Caco-2 (cell line): ENCODE measurements at regions of chr5 and their contacts with region 1.

Region 1: DNA sequence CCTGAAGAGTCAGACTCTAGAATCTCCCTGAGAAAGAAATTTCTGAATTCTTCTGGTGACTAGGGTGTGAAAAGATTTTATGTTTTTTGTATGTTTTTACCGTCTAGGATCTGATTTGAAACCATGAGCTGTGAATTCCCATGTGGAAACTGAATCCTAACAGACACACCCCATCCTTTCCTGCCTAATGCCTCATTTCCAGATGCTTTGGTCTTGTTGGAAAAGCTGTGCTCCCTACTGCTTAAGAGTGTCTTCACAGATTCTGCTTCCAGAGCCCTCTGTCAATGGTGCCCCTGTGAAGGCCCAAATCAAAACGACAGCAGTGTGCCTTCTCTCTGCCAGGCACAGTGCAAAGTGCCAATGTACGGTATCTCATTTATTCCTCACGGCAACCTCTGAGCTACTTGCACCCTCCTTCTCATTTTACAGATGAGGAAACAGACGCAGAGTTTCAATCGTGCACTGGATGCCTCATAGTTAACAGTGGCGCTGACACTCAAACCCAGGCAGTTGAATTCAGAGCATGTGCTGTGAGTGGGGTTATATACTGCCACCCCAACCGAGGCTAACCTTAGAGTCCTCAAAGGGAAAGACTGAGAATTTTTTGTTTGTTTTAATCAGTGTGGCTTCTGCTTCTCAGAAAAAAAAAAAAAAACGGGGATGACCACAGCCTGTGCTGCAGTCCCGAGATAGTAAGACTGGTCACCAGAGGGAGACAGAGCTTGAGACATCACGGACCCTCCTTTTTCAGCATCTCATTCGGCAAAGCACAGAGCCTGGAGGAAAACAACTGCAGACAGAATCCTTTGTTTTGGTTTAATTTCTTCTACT is 188.4 kb downstream of the SNCAIP start:
- DNase-seq: peak; percentile 62 to 70
- H3K4me3 ChIP-seq: no peak overlapping the region
- H3K4me3 Mint-ChIP-seq: no peak overlapping the region
- H3K27ac Mint-ChIP-seq: no peak overlapping the region
- H3K4me1 ChIP-seq: no peaks in the 10 kb centered on the region
- H3K4me1 Mint-ChIP-seq: peaks cover 9% of the 10 kb centered on the region
- H3K27me3 ChIP-seq: no peaks in the 10 kb centered on the region
- H3K27me3 Mint-ChIP-seq: no peaks in the 10 kb centered on the region
- CTCF ChIP-seq: peak; percentile 82 to 84

Region 2: DNA sequence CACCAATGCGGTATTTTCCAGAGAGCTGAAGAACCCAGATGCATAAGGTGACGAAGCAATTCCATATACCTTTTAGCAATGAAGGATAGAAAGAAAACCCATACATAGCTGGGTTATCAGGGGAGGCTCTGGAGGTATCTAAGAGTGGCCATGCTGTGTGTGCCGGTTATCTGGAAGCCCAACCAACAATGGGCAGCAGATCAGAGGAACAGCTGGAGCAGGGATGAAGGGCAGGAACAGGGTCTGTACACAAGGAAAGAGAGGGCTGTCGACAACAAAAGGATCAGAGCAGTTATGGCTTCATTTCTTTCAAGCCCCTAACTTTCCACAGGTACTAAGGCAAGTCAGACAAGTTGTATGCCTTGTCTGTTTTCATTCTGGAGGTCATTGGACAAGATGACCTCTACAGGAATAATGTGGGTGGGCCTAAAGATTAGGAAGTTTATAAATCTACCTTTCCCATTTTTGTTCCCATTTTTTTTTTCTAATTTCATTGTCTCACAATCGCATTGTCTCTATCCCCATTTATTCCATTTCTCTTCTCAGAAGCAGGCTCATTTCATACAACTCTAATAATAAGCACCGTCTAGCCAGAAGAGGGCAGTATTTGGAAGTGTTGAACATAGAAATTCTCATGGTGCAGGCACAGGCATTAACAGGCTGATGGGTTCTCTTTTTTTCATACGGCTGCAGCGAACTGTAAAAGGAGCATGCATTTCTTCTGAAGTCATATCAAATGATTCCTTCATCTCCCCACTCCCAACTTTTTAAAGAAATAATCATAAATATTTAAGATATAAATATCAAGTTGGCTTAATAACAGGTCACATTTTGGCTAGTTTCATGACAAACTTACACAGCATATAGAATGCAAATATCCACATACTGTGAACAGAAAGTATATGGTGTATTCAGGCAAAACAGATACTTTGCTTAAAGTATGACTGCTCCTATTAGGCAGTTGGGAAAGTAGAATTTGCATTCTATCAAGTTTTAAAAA is 307.7 kb before region 1 on chr5:
- CTCF ChIA-PET with region 1: interaction called, 8 read pairs
- POLR2A ChIA-PET with region 1: no interaction called
- intact Hi-C with region 1: loop called (anchors 1 kb)
- DNase-seq: peak in 1 of 2 experiments; percentile 69
- H3K4me3 ChIP-seq: no peak overlapping the region
- H3K4me3 Mint-ChIP-seq: no peak overlapping the region
- H3K27ac Mint-ChIP-seq: no peak overlapping the region
- H3K4me1 ChIP-seq: no peaks in the 10 kb centered on the region
- H3K4me1 Mint-ChIP-seq: no peaks in the 10 kb centered on the region
- H3K27me3 ChIP-seq: no peaks in the 10 kb centered on the region
- H3K27me3 Mint-ChIP-seq: peaks cover 6% of the 10 kb centered on the region
- CTCF ChIP-seq: peak; percentile 54 to 66

Region 3: GRCh38 chr5:122237906-122238305 is 262.6 kb before region 1 on chr5:
- CTCF ChIA-PET with region 1: no interaction called
- POLR2A ChIA-PET with region 1: no interaction called
- intact Hi-C with region 1: no loop called
- DNase-seq: no peak
- H3K4me3 ChIP-seq: no peak overlapping the region
- H3K4me3 Mint-ChIP-seq: no peak overlapping the region
- H3K27ac Mint-ChIP-seq: no peak overlapping the region
- H3K4me1 ChIP-seq: no peaks in the 10 kb centered on the region
- H3K4me1 Mint-ChIP-seq: no peaks in the 10 kb centered on the region
- H3K27me3 ChIP-seq: no peaks in the 10 kb centered on the region
- H3K27me3 Mint-ChIP-seq: no peaks in the 10 kb centered on the region
- CTCF ChIP-seq: no peak

Region 4: DNA sequence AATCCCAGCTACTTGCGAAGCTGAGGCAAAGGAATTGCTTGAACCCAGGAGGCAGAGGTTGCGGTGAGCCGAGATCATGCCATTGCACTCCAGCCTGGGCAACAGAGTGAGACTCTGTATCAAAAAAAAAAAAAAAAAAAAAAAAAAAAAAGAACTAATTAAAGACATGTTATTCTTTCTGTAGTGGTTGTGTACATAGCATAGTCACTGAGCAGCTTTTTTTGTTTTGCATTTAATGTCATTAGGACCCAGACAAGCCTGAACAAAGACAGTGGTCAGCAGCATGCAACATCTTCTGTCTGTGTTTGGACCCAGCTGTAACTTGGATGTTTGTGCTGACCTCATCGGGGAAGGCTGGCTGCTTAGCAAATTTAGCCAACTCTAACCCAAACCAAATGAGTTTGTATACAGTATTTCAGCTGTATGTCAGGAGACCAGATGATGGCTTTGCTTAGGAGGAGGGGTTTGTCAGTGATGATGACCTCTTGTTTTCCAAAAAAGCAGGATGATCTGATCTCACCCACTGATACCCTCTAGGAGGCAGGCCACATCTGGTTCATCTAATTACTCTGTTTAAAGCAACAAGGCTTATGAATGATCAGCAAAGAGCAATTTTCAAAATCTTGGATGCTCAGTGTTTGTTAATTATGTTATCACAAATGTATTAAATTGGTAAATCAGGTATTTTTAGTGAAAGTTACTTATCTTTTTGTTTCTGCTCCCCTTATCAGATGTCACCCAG is 148.9 kb before region 1 on chr5:
- CTCF ChIA-PET with region 1: no interaction called
- POLR2A ChIA-PET with region 1: no interaction called
- intact Hi-C with region 1: no loop called
- DNase-seq: peak in 1 of 2 experiments; percentile 43
- H3K4me3 ChIP-seq: no peak overlapping the region
- H3K4me3 Mint-ChIP-seq: peak overlapping the region; percentile 31
- H3K27ac Mint-ChIP-seq: peak overlapping the region; percentile 56
- H3K4me1 ChIP-seq: peaks cover 25% of the 10 kb centered on the region
- H3K4me1 Mint-ChIP-seq: peaks cover 24% of the 10 kb centered on the region
- H3K27me3 ChIP-seq: no peaks in the 10 kb centered on the region
- H3K27me3 Mint-ChIP-seq: no peaks in the 10 kb centered on the region
- CTCF ChIP-seq: no peak

Region 5: DNA sequence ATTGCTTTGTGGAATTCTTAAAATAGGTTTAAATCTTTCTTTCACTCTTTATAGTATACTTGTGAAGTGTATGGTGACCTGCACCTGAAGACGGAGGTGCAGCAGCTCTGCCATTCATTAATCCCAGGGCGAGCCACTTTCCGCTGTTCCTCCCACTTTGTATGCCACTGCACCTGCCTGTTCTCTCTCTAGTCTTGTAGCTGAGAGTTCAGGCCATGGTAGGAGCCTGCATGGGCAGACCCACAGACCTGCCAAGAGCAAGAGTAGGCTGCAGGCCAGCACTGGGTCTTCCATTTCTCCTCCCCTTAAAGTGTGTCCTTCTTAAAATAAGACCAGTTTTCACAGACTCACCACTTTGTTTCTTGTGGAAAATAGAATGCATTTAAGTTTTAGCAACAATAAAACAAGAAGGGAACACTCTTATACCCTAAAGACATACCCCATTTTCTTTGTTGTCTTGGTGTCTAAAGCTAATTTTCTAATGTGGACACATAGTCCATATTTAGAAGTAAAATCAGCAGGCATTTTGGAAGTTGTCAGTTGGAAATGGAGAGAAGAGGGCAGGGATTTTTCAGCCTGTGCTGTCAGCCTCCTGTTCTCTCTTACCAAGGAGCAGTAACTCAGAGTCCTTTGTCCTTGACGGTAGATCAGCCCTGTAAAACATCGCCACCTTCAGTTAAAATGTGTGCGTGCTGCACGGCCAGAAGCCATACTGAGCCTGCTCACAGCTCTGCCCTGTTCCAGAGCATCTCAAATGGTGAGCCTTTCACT is 85.2 kb before region 1 on chr5:
- CTCF ChIA-PET with region 1: no interaction called
- POLR2A ChIA-PET with region 1: no interaction called
- intact Hi-C with region 1: loop called (anchors 2 kb)
- DNase-seq: peak; percentile 70 to 74
- H3K4me3 ChIP-seq: no peak overlapping the region
- H3K4me3 Mint-ChIP-seq: no peak overlapping the region
- H3K27ac Mint-ChIP-seq: no peak overlapping the region
- H3K4me1 ChIP-seq: peaks cover 15% of the 10 kb centered on the region
- H3K4me1 Mint-ChIP-seq: peaks cover 9% of the 10 kb centered on the region
- H3K27me3 ChIP-seq: no peaks in the 10 kb centered on the region
- H3K27me3 Mint-ChIP-seq: peaks cover 3% of the 10 kb centered on the region
- CTCF ChIP-seq: peak; percentile 73 to 87

Region 6: GRCh38 chr5:122429545-122430318 is 70.7 kb before region 1 on chr5:
- CTCF ChIA-PET with region 1: no interaction called
- POLR2A ChIA-PET with region 1: no interaction called
- intact Hi-C with region 1: no loop called
- DNase-seq: no peak
- H3K4me3 ChIP-seq: no peak overlapping the region
- H3K4me3 Mint-ChIP-seq: no peak overlapping the region
- H3K27ac Mint-ChIP-seq: no peak overlapping the region
- H3K4me1 ChIP-seq: no peaks in the 10 kb centered on the region
- H3K4me1 Mint-ChIP-seq: no peaks in the 10 kb centered on the region
- H3K27me3 ChIP-seq: no peaks in the 10 kb centered on the region
- H3K27me3 Mint-ChIP-seq: no peaks in the 10 kb centered on the region
- CTCF ChIP-seq: no peak

Region 7: GRCh38 chr5:122478741-122479413 is 21.6 kb before region 1 on chr5:
- CTCF ChIA-PET with region 1: no interaction called
- POLR2A ChIA-PET with region 1: no interaction called
- intact Hi-C with region 1: loop called (anchors 1 kb)
- DNase-seq: peak; percentile 50 to 75
- H3K4me3 ChIP-seq: peak overlapping the region; percentile 32
- H3K4me3 Mint-ChIP-seq: peak overlapping the region; percentile 83
- H3K27ac Mint-ChIP-seq: peak overlapping the region; percentile 94
- H3K4me1 ChIP-seq: peaks cover 30% of the 10 kb centered on the region
- H3K4me1 Mint-ChIP-seq: peaks cover 33% of the 10 kb centered on the region
- H3K27me3 ChIP-seq: no peaks in the 10 kb centered on the region
- H3K27me3 Mint-ChIP-seq: no peaks in the 10 kb centered on the region
- CTCF ChIP-seq: no peak

Region 8: DNA sequence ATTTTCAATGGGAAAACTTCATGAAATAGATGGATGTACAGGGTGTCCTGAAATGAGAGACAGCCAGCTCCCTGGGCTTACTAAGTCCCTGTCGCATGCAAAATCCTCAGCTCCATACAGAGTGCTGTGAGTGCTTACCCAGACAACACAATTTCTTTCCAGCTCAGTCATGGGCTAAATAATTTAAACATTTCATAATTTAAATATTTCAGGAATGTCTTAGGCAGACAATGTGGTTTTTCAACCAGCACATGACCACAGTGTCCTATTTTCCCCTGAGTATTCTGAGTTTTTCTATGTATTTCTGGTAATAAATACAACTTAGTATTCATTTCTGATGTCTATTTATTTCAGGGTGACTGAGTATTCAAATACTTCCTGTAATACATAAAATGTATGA is 85.9 kb after region 1 on chr5:
- CTCF ChIA-PET with region 1: no interaction called
- POLR2A ChIA-PET with region 1: no interaction called
- intact Hi-C with region 1: no loop called
- DNase-seq: no peak
- H3K4me3 ChIP-seq: no peak overlapping the region
- H3K4me3 Mint-ChIP-seq: no peak overlapping the region
- H3K27ac Mint-ChIP-seq: no peak overlapping the region
- H3K4me1 ChIP-seq: no peaks in the 10 kb centered on the region
- H3K4me1 Mint-ChIP-seq: no peaks in the 10 kb centered on the region
- H3K27me3 ChIP-seq: no peaks in the 10 kb centered on the region; the same call in 1 of the 2 replicates
- H3K27me3 Mint-ChIP-seq: peaks cover 3% of the 10 kb centered on the region
- CTCF ChIP-seq: no peak

Region 9: GRCh38 chr5:123371575-123372179 is 871.2 kb after region 1 on chr5:
- CTCF ChIA-PET with region 1: interaction called, 6 read pairs
- POLR2A ChIA-PET with region 1: no interaction called
- intact Hi-C with region 1: loop called (anchors 1 kb)
- DNase-seq: peak; percentile 49 to 69
- H3K4me3 ChIP-seq: no peak overlapping the region
- H3K4me3 Mint-ChIP-seq: no peak overlapping the region
- H3K27ac Mint-ChIP-seq: no peak overlapping the region
- H3K4me1 ChIP-seq: peaks cover 20% of the 10 kb centered on the region
- H3K4me1 Mint-ChIP-seq: peaks cover 16% of the 10 kb centered on the region
- H3K27me3 ChIP-seq: no peaks in the 10 kb centered on the region
- H3K27me3 Mint-ChIP-seq: no peaks in the 10 kb centered on the region
- CTCF ChIP-seq: peak; percentile 36 to 49